Pancreas (tissue), 10 donors: ENCODE measurements at regions of chr5 and their contacts with region 1.

Region 1: DNA sequence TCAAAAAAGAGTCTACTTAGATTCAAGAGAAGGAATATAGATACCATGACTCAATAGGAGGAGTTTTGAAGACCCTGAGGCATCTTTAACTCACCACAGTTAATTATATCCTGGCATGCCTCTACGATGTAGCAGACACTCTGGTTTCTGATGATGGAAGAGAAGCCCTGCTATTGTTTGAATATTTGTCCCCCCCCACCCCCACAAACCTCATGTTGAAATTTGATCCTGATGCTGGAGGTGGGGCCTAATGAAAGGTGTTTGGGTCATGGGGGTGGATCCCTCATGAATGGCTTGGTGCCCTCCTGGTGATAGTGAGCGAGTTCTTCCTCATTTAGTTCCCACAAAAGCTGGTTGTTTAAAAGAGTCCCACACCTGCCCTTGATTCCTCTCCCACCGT is 147.9 kb upstream of the TBCA start:
- DNase-seq: no peak
- ATAC-seq: no peak
- H3K4me3 ChIP-seq: no peak overlapping the region
- H3K27ac ChIP-seq: no peak overlapping the region
- H3K4me1 ChIP-seq: no peaks in the 10 kb centered on the region
- H3K27me3 ChIP-seq: no peaks in the 10 kb centered on the region
- CTCF ChIP-seq: no peak

Region 2: GRCh38 chr5:76807296-76807695 is 1116.8 kb before region 1 on chr5:
- intact Hi-C with region 1: no loop called
- DNase-seq: no peak
- ATAC-seq: peak in 1 of 4 donors; percentile 25
- H3K4me3 ChIP-seq: no peak overlapping the region
- H3K27ac ChIP-seq: no peak overlapping the region
- H3K4me1 ChIP-seq: no peaks in the 10 kb centered on the region
- H3K27me3 ChIP-seq: no peaks in the 10 kb centered on the region
- CTCF ChIP-seq: no peak

Region 3: DNA sequence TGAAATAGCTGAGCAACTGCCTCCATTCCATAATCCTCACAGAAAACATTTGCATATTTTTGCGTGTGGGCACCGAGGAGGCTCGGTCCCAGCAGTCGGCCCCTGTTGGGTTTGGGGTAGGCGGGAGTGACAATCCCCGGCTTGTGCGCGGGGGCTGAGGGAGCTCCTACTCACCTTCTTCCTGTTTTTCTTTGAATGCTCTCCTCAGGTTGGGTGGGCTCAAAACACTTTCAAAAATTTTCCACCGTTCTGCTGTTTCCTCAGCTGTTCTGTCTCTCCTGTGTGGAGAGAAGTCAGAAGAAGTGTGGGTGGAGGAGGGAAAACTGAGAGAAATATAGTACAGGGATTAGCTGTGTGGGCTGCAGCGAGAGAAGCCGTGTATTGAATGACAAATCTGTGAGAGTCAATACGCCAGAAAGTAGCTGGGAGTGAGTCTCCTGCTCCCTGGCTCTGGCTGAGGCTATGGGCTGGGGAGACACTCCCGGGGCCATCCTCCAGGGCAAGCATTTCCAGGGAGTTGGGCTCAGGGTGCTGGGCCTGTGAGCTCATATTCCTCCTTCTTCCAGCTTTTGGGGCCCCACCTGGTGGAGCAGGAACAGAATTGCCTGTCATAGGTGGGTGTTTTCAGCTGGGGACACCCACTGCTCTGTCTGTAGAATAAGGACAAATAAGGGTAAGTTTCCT is 1850.2 kb after region 1 on chr5:
- intact Hi-C with region 1: loop called in 1 of 3 experiments (anchors 10 kb)
- DNase-seq: no peak
- ATAC-seq: peak in 2 of 4 donors; percentile 16 to 30
- H3K4me3 ChIP-seq: no peak overlapping the region
- H3K27ac ChIP-seq: no peak overlapping the region
- H3K4me1 ChIP-seq: no peaks in the 10 kb centered on the region
- H3K27me3 ChIP-seq: no peaks in the 10 kb centered on the region
- CTCF ChIP-seq: no peak